PC-9 (cell line): ENCODE measurements at regions of chr15 and their contacts with region 1.

Region 1: GRCh38 chr15:20272422-20273184 is 269.0 kb downstream of the GOLGA6L6 start:
- DNase-seq: peak in 1 of 2 experiments; percentile 34
- H3K4me3 ChIP-seq: no peak overlapping the region
- H3K27ac ChIP-seq: no peak overlapping the region
- H3K4me1 ChIP-seq: no peaks in the 10 kb centered on the region
- H3K27me3 ChIP-seq: peaks cover 66% of the 10 kb centered on the region
- CTCF ChIP-seq: no peak

Region 2: GRCh38 chr15:20340931-20341661 is 68.5 kb after region 1 on chr15:
- CTCF ChIA-PET with region 1: no interaction called
- POLR2A ChIA-PET with region 1: no interaction called
- intact Hi-C with region 1: loop called (anchors 5 kb)
- DNase-seq: peak in 1 of 2 experiments; percentile 14
- H3K4me3 ChIP-seq: no peak overlapping the region
- H3K27ac ChIP-seq: no peak overlapping the region
- H3K4me1 ChIP-seq: no peaks in the 10 kb centered on the region
- H3K27me3 ChIP-seq: peaks cover 5% of the 10 kb centered on the region; the same call in 1 of the 2 replicates
- CTCF ChIP-seq: no peak

Region 3: GRCh38 chr15:20376872-20377271 is 104.3 kb after region 1 on chr15:
- CTCF ChIA-PET with region 1: no interaction called
- POLR2A ChIA-PET with region 1: no interaction called
- intact Hi-C with region 1: no loop called
- DNase-seq: no peak
- H3K4me3 ChIP-seq: no peak overlapping the region
- H3K27ac ChIP-seq: no peak overlapping the region
- H3K4me1 ChIP-seq: no peaks in the 10 kb centered on the region
- H3K27me3 ChIP-seq: no peaks in the 10 kb centered on the region
- CTCF ChIP-seq: no peak